ENCODE measurements at regions of chr1 and their contacts with region 1.

Region 1: DNA sequence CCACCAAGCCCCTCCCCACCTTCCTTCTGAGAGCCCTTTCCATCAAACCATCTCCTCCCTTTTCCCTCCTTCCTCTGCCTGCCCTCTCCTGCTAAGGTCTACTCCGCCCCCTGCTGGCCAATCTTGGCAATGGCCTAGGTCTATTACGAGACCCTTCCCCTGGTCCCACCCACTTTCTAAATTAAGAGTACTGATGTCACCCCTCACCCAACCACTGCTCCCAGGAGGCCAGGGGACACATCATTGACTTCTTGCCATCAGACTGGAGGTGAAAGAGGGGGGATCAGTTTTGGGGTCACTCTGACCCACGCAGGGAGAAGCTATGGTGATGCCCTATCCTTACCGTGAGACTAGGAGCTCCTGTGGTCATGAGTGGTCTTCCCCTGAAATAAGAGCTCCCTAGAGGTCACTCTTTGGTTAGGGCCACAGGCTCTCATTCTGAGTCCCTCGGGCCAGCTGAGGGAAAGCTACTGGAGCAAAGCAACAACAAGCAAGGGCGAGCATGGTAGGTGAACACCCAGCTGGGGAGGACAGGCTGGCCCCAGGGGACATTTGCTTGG is 34.6 kb upstream of the S100A7 start:
- DNase-seq: peak; percentile 59
- H3K4me3 Mint-ChIP-seq: no peak overlapping the region
- H3K27ac Mint-ChIP-seq: no peak overlapping the region
- H3K4me1 Mint-ChIP-seq: no peaks in the 10 kb centered on the region
- H3K27me3 Mint-ChIP-seq: peaks cover 16% of the 10 kb centered on the region

Region 2: DNA sequence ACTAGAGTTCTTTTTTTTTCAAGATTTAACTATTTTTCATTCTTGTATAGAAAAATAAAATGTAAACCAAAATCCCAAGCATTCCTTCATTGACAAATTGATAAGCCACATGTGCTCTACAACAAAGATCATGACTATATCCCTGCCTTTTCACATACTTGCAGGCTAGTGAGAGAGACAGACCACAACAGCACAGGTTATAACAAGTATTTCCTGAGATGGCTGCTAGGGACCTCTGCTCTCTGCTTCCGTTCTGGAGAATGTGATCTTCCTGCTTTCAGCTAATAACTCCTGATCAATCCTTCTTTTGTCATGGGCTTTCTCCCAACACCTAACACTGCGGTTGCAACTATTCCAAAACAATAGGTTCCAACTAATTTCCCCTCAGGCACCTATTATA is 367.8 kb before region 1 on chr1:
- intact Hi-C with region 1: no loop called
- DNase-seq: no peak
- H3K4me3 Mint-ChIP-seq: no peak overlapping the region
- H3K27ac Mint-ChIP-seq: no peak overlapping the region
- H3K4me1 Mint-ChIP-seq: no peaks in the 10 kb centered on the region
- H3K27me3 Mint-ChIP-seq: peaks cover 8% of the 10 kb centered on the region

Region 3: GRCh38 chr1:153465811-153466636 is 29.0 kb before region 1 on chr1:
- intact Hi-C with region 1: loop called (anchors 1 kb)
- DNase-seq: peak; percentile 42
- H3K4me3 Mint-ChIP-seq: no peak overlapping the region
- H3K27ac Mint-ChIP-seq: no peak overlapping the region
- H3K4me1 Mint-ChIP-seq: peaks cover 5% of the 10 kb centered on the region
- H3K27me3 Mint-ChIP-seq: peaks cover 26% of the 10 kb centered on the region

Region 4: DNA sequence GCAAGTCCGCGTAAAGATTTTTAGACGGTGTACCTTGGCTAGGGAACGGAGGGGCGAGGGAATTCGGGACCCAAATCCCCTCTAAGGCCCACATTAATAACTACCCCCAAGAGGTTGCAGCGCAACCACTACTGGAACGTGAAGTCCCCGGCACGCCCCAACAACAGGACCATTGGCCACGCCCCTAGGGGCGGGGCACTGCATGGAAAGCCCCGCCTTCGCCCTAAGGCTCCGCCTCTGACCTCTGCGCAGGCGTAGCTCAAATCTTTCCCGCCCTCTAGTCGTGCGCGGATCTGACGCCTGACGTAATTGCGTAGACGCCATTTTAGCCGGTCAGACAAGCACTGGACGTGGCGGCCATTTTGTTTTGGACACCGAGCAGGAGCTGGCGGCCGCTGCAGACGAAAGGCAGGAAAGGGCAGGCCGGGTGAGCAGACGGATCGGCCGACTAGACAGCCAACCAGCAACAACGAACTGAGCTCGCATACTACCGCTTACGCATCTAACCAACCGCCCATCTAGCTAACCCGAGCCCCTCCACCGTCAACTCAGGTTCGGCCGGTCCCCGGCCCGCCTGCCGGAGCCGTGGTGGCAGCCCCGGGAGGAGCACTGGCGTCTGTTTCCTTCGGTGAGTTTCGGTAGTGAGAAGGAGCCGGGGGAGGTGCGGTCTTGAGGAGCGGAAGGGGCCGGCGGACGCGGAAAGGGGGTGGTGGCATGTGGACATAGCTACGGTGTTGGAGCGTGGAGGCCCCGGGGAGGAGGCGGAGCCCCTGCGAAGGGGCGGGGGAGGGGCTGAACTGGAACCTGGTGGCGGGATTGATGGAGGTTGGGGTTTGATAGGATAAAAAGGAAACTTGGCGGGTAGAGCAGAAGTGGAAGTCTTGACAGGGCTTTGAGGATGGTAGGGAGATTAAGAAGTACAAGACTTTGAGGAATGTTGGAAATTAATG is 138.9 kb after region 1 on chr1 and contains the start of gene CHTOP:
- intact Hi-C with region 1: no loop called
- DNase-seq: peak; percentile 96
- H3K4me3 Mint-ChIP-seq: peak within 1 kb of the TSS; percentile 97
- H3K27ac Mint-ChIP-seq: peak within 1 kb of the TSS; percentile 100
- H3K4me1 Mint-ChIP-seq: peaks cover 45% of the 10 kb centered on the region
- H3K27me3 Mint-ChIP-seq: no peaks in the 10 kb centered on the region
- total RNA-seq, gene CHTOP: 101 and 105 TPM in 2 replicates

Region 5: DNA sequence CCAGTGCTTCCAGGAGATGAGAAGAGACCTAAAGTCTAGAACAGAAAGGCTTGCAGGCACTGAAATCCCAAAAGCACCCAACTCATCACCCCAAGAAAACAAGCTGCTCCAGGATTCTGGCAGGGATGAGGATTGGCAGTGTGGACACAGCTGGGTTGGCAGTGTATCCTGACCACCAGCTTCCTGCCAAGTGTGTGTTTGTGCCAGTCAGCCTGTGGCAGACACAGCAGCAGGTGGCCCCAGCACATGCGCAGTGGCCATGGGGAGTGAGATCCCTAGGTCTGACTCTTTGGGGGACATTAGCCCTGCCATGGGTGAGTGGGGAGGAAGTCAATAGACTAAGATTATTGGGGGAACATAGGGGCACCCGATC is 154.8 kb after region 1 on chr1:
- intact Hi-C with region 1: no loop called
- DNase-seq: no peak
- H3K4me3 Mint-ChIP-seq: no peak overlapping the region
- H3K27ac Mint-ChIP-seq: no peak overlapping the region
- H3K4me1 Mint-ChIP-seq: peaks cover 14% of the 10 kb centered on the region
- H3K27me3 Mint-ChIP-seq: no peaks in the 10 kb centered on the region